Activated naive CD4-positive, alpha-beta T cell treated with anti-CD3 and anti-CD28 coated beads for 36 hours (primary cell): ENCODE measurements at regions of chr12 and their contacts with region 1.

Region 1: DNA sequence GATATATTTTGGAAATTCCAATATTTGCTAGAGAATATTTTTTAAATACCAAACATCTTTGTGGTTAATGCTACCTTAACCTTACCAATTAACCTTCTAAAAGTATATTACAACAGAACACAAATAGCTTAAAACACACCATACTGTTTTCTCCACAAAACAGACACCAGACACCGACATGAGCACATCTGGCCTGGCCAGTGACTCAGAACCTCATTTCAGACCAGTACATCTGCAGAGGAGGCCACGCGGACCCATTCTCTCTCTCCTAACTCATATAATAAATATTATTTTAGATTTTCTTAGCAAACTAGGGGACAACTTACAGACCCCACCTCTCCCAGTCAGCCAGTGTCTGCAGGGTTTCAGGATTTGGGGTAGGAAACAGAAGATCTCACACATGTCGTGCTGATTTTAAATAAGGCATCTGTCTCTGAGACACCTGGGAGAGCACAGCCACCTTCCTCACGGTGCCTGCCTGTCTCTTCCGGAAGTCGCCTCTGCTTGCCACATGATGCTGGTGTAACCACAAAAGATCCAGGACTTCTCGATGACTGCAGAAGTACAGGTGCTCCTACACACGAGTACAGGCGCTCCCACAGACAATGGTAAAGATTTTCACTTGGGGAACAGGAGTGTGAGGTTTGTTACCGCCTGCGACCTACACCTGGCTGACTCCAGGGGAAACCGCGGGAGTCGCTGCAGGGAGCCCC is 9.7 kb upstream of the ANKLE2 start:
- DNase-seq: peak; percentile 75
- H3K4me3 Mint-ChIP-seq: peak overlapping the region; percentile 30
- H3K27ac Mint-ChIP-seq: peak overlapping the region; percentile 80
- H3K4me1 Mint-ChIP-seq: peaks cover 57% of the 10 kb centered on the region
- H3K27me3 Mint-ChIP-seq: no peaks in the 10 kb centered on the region

Region 2: DNA sequence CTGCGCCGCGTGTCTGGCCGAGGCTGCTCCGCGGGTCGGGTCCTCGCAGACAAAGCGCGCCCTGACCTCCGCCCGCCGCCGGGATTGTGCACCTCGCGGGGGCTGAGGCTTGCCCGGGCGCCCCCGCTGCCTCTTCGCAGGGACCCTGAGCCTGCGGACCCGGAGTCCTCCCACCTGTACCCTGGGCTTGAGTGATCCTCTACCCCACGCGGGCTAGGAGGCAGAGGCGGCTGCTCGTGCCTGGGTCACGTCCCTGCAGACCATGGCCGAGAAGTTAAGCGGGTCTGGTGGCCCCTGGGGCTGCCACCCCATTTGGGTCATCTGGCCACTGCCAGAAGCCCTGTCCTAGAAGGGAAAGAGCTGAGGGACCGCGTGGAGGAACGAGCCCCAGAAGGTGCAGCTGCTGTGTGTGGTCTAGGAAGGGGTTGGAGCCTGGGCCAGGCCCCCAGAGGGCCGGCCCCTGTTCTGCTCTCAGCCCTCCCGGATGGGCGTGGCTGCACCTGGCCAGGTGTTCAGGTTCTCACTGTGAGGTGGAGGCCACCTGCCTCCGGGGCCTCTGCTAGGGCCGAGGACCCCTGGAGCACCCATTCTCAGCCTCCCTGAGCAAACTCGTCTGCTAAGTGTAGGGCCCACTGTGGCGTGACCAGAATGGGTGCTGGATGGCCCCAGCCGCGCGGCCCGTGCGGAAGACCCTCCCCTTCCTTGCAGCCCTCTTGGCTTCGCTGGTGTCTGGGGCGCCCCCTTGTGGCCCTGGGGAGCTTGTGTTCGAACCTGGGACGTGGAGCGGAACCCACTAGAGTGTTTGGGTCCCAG is 210.5 kb before region 1 on chr12:
- CTCF ChIA-PET with region 1: no interaction called
- intact Hi-C with region 1: no loop called
- DNase-seq: peak; percentile 83
- H3K4me3 Mint-ChIP-seq: peak overlapping the region; percentile 75
- H3K27ac Mint-ChIP-seq: no peak overlapping the region
- H3K4me1 Mint-ChIP-seq: peaks cover 5% of the 10 kb centered on the region
- H3K27me3 Mint-ChIP-seq: peaks cover 7% of the 10 kb centered on the region

Region 3: GRCh38 chr12:132672017-132672515 is 99.2 kb before region 1 on chr12:
- CTCF ChIA-PET with region 1: no interaction called
- intact Hi-C with region 1: no loop called
- DNase-seq: no peak
- H3K4me3 Mint-ChIP-seq: no peak overlapping the region
- H3K27ac Mint-ChIP-seq: no peak overlapping the region
- H3K4me1 Mint-ChIP-seq: no peaks in the 10 kb centered on the region
- H3K27me3 Mint-ChIP-seq: no peaks in the 10 kb centered on the region

Region 4: GRCh38 chr12:132812631-132813305 is 41.5 kb after region 1 on chr12:
- CTCF ChIA-PET with region 1: interaction called, 4 read pairs
- intact Hi-C with region 1: loop called (anchors 1 kb)
- DNase-seq: no peak
- H3K4me3 Mint-ChIP-seq: no peak overlapping the region
- H3K27ac Mint-ChIP-seq: no peak overlapping the region
- H3K4me1 Mint-ChIP-seq: peaks cover 16% of the 10 kb centered on the region
- H3K27me3 Mint-ChIP-seq: no peaks in the 10 kb centered on the region

Region 5: GRCh38 chr12:132834181-132834711 is 63.0 kb after region 1 on chr12:
- CTCF ChIA-PET with region 1: interaction called, 11 read pairs
- intact Hi-C with region 1: no loop called
- DNase-seq: peak; percentile 55
- H3K4me3 Mint-ChIP-seq: peak overlapping the region; percentile 13
- H3K27ac Mint-ChIP-seq: peak overlapping the region; percentile 85
- H3K4me1 Mint-ChIP-seq: peaks cover 38% of the 10 kb centered on the region
- H3K27me3 Mint-ChIP-seq: no peaks in the 10 kb centered on the region